ENCODE measurements at regions of chr17 and their contacts with region 1.

Region 1: GRCh38 chr17:7557775-7558543 is 591 bp upstream of the TNFSF13 start:
- DNase-seq: peak; percentile 94
- H3K4me3 ChIP-seq: peak overlapping the region; percentile 15 to 98 (median 35)
- H3K27ac ChIP-seq: peak overlapping the region; percentile 93 to 98 (median 98)
- H3K4me1 ChIP-seq: peaks cover 37 to 59% (median 54%) of the 10 kb centered on the region in 4 donors
- H3K27me3 ChIP-seq: no peaks in the 10 kb centered on the region
- CTCF ChIP-seq: no peak
- EP300 ChIP-seq: peak; percentile 14
- POLR2A ChIP-seq: peak; percentile 94

Region 2: DNA sequence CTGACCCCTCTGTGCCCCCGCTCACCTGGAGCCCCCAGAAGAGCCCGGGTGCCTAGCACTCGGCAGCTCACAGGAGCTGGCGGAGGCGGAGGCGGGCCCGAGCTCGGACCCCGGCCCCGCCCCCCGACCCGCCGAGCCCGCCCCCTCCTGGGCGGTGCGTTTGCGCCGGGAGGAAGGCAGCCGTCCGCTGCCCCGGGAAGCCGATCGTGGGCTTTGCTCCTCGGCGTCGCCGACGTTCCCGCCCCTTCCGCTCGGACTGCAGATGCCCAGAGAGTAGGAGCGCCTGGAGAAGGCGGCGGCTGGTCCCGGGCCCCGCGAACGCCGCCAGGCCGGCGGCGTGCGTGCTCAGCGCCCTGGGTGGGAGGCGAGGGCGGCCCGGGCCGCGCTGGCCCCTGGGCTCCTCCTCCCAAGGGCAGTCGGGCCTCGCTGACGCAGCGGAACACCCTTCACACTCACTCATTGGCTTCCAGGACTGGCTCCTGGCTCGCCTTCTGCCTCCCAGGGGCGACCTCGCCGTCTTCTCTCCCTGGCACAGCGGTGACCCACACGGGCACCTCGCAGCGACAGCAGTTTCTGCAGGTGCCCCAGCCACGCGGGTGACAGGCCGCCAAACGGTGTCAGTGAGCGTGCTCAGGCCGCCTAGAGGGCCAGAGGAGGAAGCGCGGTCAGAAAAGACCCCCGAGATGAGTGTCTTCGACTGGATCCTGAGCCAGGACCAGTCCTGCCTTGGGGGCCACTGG is 163.3 kb before region 1 on chr17 and contains the start of gene PLSCR3:
- in situ Hi-C with region 1: no loop called
- intact Hi-C with region 1: no loop called
- DNase-seq: peak; percentile 90
- H3K4me3 ChIP-seq: peak within 1 kb of the TSS; percentile 59 to 91 (median 77)
- H3K27ac ChIP-seq: peak within 1 kb of the TSS; percentile 90 to 98 (median 94)
- H3K4me1 ChIP-seq: peaks cover 11 to 22% (median 17%) of the 10 kb centered on the region in 4 donors
- H3K27me3 ChIP-seq: no peaks in the 10 kb centered on the region
- CTCF ChIP-seq: peak; percentile 24 to 77 (median 36)
- EP300 ChIP-seq: no peak
- POLR2A ChIP-seq: peak; percentile 76
- total RNA-seq, gene PLSCR3: 13.2 to 32.4 (median 18.4) TPM

Region 3: DNA sequence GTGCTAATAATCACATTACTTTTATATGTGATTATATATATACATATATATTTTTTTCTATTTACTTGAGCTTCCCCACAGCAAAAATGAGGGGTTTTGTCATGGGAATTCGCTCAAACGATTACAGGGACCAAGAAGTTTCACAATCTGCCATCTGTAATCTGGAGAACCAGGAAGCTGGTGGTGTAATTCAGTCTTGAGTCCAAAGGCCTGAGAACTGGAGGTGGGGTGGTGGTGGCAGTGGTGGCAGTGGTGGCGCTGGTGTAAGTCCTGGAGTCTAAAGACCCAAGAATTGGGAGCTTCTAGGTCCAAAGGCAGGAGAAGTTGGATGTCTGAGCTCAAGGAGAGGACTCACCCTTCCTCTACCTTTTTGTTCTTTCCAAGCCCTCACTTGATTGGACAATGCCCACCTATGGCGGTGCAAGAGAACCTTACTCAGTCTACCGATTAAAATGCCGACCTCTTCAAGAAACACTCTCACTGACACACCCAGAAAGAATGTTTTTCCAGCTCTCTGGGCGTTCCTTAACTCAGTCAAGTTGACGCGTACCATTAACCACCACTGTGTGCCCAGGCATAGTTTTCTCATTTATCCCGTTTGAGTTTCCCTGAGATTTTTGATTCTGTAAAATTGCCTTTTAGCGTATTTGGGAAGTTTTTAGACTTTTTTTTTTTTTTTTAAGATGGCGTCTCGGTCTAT is 41.9 kb before region 1 on chr17:
- in situ Hi-C with region 1: no loop called
- intact Hi-C with region 1: loop called (anchors 5 kb)
- DNase-seq: peak; percentile 71
- H3K4me3 ChIP-seq: no peak overlapping the region
- H3K27ac ChIP-seq: peak overlapping the region; percentile 42 to 62 (median 56)
- H3K4me1 ChIP-seq: peaks cover 0 to 17% (median 10%) of the 10 kb centered on the region in 4 donors
- H3K27me3 ChIP-seq: no peaks in the 10 kb centered on the region
- CTCF ChIP-seq: peak in 1 of 5 experiments; percentile 15
- EP300 ChIP-seq: no peak
- POLR2A ChIP-seq: no peak